ENCODE measurements at regions of chr2 and their contacts with region 1.

Region 1: DNA sequence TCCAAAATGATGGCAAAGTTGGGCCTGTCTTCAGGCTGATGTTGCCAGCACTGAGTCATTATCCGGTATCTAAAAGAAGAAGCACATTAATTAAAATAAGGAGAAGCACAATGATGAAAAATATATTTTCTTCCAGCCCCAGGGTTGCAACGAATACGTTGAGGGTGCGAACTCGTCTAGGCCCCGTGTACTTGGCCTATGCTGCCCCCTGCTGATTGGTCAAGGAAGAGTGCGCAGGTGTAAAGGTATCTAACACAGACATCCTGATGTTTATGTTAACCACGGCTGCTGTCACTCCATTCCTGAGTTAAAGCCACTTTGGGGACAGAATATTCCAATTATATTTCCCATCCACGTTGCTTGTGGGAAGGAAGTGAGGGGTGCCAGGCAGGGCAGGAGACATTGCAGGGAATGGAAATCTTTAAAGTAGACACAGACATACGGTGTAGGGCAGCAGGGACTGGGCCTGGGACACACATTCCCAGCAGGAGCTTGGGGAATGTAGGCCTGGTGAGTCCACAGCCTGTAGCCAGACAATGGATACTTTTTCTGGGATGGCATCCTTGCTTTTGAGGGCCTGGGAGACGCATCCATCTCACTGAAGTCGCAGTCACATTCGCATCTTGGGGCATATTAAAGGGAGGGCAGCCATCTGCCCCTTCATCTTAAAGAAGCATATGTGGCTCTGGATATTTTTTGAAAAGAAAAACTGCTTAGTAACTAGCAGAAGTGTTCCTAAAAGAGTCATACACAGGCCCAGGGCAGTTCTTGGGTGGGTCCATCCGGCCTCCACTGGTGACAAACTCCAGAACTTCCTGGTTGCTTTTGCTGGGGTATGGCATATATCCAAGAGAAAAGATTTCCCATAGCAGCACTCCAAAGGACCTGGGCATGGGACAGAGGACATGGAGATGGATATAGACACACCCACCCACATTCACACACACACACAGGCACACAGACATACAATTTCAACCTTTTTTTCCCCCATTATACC is 81.9 kb downstream of the CLIP4 start:
- DNase-seq: peak; percentile 53 to 88
- H3K4me3 ChIP-seq: no peak overlapping the region
- CTCF ChIP-seq: no peak
- POLR2A ChIP-seq: no peak

Region 2: DNA sequence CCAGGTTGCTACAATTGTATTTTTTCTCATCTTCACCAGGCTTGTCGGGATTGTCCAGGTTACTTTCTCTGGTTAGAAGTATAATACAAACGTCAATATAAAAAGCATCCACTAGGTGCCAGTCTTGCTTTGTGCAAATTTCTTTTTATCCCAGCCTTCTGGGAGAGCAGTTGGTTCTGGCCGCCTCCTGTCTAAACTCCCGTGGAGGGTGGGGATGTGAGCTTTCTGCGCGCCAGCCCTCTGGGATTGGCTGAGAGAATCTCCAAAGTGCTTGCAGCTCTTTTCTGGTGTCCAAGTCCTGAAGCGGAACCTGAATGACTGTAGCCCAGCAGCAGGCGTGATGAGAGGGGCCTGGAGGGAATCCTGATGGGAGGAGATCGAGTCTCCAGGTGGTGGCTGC is 238.4 kb before region 1 on chr2:
- intact Hi-C with region 1: loop called (anchors 5 kb)
- DNase-seq: peak; percentile 65 to 89
- H3K4me3 ChIP-seq: no peak overlapping the region
- CTCF ChIP-seq: peak in 1 of 3 donors; percentile 51
- POLR2A ChIP-seq: no peak

Region 3: GRCh38 chr2:29063646-29064343 is 133.3 kb before region 1 on chr2:
- intact Hi-C with region 1: no loop called
- DNase-seq: peak in 1 of 2 donors; percentile 76
- H3K4me3 ChIP-seq: no peak overlapping the region
- CTCF ChIP-seq: no peak
- POLR2A ChIP-seq: no peak

Region 4: DNA sequence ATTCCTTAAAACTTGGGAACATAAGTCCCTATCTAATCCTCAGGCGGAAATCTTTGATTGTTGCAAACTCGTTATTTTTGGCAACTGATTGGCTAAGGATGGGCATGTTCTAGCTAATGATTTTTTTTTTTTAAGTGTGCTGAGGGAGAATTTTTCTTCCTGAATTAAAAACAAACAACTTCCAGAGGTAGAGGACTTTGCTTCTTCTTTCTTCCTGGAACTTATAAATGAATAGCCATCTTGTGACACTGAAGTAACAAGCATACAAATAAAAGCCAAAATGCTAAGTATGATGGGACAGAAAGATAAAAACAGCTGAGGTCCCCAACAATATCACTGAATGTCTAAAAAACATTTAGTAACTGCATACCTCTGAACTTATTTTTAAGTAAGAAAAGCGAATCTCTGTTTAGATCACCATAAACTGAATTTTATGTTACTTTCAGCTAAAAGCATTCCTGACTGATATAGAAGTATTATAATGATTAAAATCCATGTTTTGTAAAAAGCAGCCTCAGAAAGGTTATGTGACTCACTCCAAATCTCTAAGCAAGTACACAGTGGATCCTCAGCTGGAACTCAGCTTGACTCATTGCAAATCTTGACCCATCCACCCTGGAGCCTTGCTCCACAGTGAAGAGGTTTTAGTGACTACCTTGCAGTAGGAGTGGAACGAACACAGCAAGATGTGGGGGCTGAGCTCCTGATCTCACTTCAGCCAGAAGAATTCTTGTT is 262.5 kb after region 1 on chr2:
- intact Hi-C with region 1: no loop called
- DNase-seq: no peak
- H3K4me3 ChIP-seq: no peak overlapping the region
- CTCF ChIP-seq: no peak
- POLR2A ChIP-seq: no peak